ENCODE measurements at regions of chr2 and their contacts with region 1.

Region 1: GRCh38 chr2:170973492-170974303 is 44.6 kb downstream of the GORASP2 start:
- DNase-seq: peak; percentile 95
- H3K4me3 ChIP-seq: peak overlapping the region; percentile 32 to 77 (median 58)
- H3K27ac ChIP-seq: peak overlapping the region; percentile 53 to 84 (median 81)
- H3K4me1 ChIP-seq: peaks cover 0 to 35% (median 14%) of the 10 kb centered on the region in 6 donors
- H3K27me3 ChIP-seq: no peaks in the 10 kb centered on the region
- CTCF ChIP-seq: peak; percentile 74 to 98 (median 95)
- POLR2A ChIP-seq: no peak

Region 2: DNA sequence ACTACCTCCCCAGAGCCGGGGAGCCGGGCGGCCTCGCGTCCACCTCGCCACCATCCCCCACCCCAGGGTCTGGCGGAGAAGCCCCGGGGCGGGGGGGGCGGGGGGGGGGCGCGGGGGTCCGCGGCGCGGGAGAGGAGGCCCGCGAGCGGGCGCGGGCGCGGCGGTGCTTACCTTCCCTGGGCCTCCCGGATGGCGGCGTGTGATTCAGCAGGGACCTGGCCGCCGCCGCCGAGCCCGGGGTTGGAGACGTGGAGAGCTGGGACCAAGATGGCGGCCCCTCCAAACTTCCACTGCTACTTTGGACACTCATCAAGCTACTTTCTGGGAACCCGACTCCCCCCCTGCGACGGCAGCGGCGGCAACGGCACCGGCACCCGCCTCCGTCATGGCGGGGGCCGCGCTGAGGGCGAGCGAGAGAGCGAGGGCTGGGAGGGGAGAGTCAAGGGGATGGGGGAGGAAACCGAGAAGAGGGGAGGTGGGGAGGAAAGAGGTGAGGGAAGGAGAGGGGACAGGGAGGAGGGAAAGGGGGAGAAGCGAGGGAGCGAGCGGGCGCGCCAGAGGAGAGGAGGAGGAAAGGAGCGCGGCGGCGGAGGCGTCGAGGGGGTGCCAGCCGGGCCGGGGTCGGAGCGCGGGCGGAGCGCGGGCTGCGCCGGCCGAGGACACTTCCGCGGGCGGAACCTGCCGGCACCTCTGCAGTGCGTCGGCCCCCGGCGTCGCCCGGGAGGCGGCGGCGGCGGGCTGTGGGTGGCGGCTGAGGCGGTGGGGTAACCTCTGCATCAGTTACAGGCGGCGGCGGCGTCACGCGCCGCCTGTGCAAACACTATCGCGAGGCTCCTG is 186.6 kb after region 1 on chr2 and contains the start of gene TLK1:
- intact Hi-C with region 1: loop called (anchors 10 kb)
- DNase-seq: peak; percentile 96
- H3K4me3 ChIP-seq: peak within 1 kb of the TSS; percentile 52 to 95 (median 80)
- H3K27ac ChIP-seq: peak within 1 kb of the TSS; percentile 93 to 98 (median 96)
- H3K4me1 ChIP-seq: peaks cover 26 to 77% (median 68%) of the 10 kb centered on the region in 6 donors
- H3K27me3 ChIP-seq: no peaks in the 10 kb centered on the region
- CTCF ChIP-seq: peak in 3 of 11 experiments; percentile 22 to 45 (median 28)
- POLR2A ChIP-seq: peak in 1 of 3 donors; percentile 32
- total RNA-seq, gene TLK1: 49.7 to 100.0 (median 87.5) TPM

Region 3: DNA sequence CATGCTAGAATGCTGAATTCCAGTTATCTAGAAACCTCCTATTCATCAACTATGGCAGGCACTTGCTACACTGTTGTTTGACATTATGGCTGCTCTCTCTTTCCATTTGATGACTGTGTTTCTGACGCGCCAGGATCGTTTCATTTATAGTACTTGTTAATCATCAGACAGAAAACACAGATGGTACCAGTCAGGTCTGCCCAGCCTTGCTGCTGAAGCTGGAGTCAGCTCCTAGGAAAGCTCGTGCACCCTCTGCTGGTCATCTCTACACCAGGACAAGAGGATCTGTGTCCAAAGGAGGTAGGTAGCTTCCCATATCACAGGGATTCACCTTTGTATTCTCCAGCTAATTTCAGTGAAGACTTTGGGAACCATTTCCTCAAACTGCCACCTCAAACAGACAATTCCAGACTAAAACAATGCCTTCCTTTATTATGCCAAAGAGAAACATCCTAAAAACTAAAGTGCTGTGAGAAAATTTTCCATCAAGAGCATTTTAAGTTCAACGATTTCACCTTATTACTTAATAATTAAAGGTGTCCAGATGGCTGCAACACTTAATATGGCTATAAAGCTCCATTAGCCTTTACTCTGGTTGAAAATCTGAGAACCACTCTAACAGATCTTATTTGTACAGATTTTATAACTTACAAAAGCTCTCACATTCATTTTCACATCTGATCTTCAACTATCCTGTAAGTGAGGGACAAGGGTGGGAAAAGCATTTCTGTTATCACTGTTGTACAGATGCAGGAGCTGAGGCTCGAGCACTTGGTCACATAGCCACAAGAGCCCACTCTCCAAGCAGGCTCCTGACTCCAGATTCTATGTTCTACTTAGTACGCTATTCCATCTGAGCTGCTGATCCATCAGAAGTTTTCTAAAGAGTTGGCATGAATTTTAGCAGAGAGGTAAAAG is 442.6 kb after region 1 on chr2:
- intact Hi-C with region 1: loop called (anchors 2 kb)
- DNase-seq: peak; percentile 92
- H3K4me3 ChIP-seq: no peak overlapping the region
- H3K27ac ChIP-seq: peak overlapping the region in 6 of 8 donors; percentile 23 to 61 (median 44)
- H3K4me1 ChIP-seq: peaks cover 0 to 20% (median 10%) of the 10 kb centered on the region in 6 donors
- H3K27me3 ChIP-seq: no peaks in the 10 kb centered on the region
- CTCF ChIP-seq: peak; percentile 62 to 86 (median 80)
- POLR2A ChIP-seq: no peak

Region 4: GRCh38 chr2:172102391-172103278 is 1128.9 kb after region 1 on chr2 and contains the start of gene DLX2:
- intact Hi-C with region 1: loop called (anchors 10 kb)
- DNase-seq: peak; percentile 91
- H3K4me3 ChIP-seq: peak within 1 kb of the TSS; percentile 44 to 80 (median 65)
- H3K27ac ChIP-seq: no peak within 1 kb of the TSS
- H3K4me1 ChIP-seq: peaks cover 49 to 89% (median 70%) of the 10 kb centered on the region in 6 donors
- H3K27me3 ChIP-seq: peaks cover 35 to 100% (median 100%) of the 10 kb centered on the region in 7 donors
- CTCF ChIP-seq: no peak
- POLR2A ChIP-seq: no peak
- total RNA-seq, gene DLX2: not detected

Measured in spleen (tissue), 13 donors.